ENCODE measurements at regions of chr9 and their contacts with region 1.

Region 1: DNA sequence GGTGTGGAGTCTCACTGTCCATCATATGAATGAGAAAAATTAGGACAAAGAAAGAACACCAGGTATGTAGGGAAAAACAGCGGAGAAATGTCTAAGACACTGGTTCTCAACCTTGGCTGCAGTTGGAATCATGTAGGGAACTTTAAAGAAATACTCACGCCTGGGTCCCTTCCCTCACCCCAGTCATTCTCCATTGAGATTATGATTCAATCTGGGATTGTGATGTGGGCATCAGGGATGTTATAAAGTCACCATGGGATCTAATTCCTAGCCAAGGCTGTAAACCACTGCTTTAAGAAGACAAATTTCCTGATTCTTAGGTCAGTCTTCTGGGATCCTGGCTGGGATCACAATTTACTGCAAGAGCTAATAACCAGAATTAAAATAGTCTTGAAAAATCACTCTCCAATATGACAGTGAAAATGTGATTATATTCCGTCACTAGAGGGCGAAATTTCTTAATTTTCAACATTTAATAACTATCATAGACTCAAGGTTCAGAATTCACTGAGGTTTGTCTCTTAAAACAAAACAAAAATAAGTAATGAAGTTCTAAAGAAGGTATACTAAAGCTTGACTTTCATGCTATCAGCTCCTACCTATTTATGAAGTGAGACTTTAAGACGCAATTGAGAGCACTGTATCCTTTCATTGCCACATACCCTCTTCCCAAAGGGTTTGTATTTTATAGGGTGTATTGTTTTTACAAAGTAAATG is 60.5 kb downstream of the GLDC start:
- DNase-seq: no peak
- H3K4me3 ChIP-seq: no peak overlapping the region
- H3K27ac ChIP-seq: no peak overlapping the region
- H3K27me3 ChIP-seq: peaks cover 5% of the 10 kb centered on the region
- CTCF ChIP-seq: peak; percentile 46

Region 2: GRCh38 chr9:6566409-6567139 is 18.5 kb before region 1 on chr9:
- CTCF ChIA-PET with region 1: interaction called, 15 read pairs
- POLR2A ChIA-PET with region 1: no interaction called
- DNase-seq: peak; percentile 86
- H3K4me3 ChIP-seq: peak overlapping the region; percentile 41
- H3K27ac ChIP-seq: peak overlapping the region; percentile 97
- H3K27me3 ChIP-seq: no peaks in the 10 kb centered on the region
- CTCF ChIP-seq: no peak

Region 3: DNA sequence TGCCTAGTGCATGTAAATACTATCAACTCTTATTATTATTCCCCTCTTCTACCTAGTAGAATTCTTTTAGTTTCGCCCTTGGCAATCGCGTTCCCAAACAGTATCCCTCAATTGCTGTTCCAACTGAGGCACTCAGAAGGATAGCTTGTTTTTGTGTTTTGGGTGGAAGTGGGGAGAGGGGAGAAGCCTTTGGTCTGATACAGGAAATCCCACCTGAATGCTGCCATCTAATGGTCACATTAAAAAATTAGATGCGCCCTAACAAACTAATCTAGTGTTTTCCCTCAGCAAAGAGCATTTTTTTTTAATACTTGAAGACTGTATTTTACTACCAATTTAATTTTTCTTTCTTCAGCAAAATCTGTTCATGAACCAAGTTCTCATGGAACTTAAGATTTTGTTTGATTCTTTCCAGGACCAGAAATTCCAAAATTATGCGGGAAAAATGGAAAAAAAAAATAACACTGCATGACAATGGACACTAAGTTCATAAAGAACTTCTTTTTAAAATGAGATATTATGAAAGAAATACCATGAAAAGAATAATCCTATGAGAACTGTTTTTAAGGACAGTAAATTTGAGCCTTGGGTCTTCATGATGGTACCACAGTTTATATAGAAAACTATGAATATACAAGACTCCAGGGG is 82.7 kb after region 1 on chr9:
- CTCF ChIA-PET with region 1: interaction called, 68 read pairs
- POLR2A ChIA-PET with region 1: no interaction called
- DNase-seq: no peak
- H3K4me3 ChIP-seq: no peak overlapping the region
- H3K27ac ChIP-seq: no peak overlapping the region
- H3K27me3 ChIP-seq: no peaks in the 10 kb centered on the region
- CTCF ChIP-seq: peak; percentile 70

Region 4: DNA sequence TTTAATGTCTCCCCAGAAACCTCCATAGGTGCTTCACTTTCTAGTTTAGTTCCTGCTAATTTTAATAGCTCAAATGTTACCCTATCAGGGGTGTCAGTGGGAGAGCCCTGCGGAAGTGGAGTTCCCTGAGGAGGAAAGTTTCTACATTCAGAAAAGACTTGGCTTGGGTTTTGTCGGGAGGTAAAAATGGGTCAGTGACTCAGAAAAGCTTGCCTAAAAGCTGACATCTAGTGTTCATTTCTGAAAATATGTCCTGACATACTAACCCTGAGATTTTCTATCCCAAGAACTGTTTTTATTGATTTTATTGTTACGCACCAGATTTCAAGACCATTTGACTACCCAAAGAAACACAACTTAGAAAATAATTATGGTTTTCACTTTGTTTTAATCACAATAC is 101.4 kb after region 1 on chr9:
- CTCF ChIA-PET with region 1: interaction called, 11 read pairs
- POLR2A ChIA-PET with region 1: interaction called, 3 read pairs
- DNase-seq: no peak
- H3K4me3 ChIP-seq: no peak overlapping the region
- H3K27ac ChIP-seq: no peak overlapping the region
- H3K27me3 ChIP-seq: no peaks in the 10 kb centered on the region
- CTCF ChIP-seq: peak; percentile 39